ENCODE measurements at regions of chr14 and their contacts with region 1.

Region 1: DNA sequence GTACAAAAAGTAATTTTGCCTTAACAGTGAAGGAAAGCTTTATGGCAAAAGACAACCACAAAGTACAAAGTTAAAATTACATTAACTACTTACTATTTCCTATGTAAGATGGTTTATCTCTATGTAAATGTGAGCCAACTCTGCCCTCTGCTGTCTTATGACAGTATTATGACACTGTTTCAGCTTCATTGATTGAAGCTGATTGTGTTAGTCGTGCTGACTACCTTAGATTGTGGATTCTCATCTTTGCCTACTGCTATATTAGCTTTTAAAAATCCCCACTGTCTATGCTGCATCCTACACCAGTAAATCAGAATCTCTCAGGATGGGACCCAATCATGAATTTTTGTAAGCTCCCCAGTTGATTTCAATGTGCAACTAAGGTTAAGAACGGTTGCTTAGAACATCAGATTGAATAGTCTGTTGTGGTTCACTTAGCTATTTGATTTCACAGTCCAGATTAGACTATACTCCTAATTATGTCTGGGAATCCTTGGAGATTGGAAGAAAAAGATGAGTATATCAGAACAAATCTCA is 12.2 kb upstream of the SPTB start:
- DNase-seq: peak; percentile 76 to 87 (median 83)
- H3K4me3 ChIP-seq: no peak overlapping the region
- H3K27ac ChIP-seq: no peak overlapping the region
- H3K4me1 ChIP-seq: no peaks in the 10 kb centered on the region
- H3K27me3 ChIP-seq: peaks cover 0 to 6% (median 0%) of the 10 kb centered on the region in 5 experiments

Region 2: GRCh38 chr14:64764641-64765520 is 127.0 kb before region 1 on chr14:
- CTCF ChIA-PET with region 1: interaction called, 15 read pairs
- POLR2A ChIA-PET with region 1: no interaction called
- DNase-seq: peak; percentile 65 to 78 (median 68)
- H3K4me3 ChIP-seq: peak overlapping the region in 3 of 7 experiments; percentile 41 to 64 (median 52)
- H3K27ac ChIP-seq: no peak overlapping the region
- H3K4me1 ChIP-seq: peaks cover 0 to 41% (median 27%) of the 10 kb centered on the region in 4 experiments
- H3K27me3 ChIP-seq: peaks cover 0 to 21% (median 0%) of the 10 kb centered on the region in 5 experiments

Region 3: DNA sequence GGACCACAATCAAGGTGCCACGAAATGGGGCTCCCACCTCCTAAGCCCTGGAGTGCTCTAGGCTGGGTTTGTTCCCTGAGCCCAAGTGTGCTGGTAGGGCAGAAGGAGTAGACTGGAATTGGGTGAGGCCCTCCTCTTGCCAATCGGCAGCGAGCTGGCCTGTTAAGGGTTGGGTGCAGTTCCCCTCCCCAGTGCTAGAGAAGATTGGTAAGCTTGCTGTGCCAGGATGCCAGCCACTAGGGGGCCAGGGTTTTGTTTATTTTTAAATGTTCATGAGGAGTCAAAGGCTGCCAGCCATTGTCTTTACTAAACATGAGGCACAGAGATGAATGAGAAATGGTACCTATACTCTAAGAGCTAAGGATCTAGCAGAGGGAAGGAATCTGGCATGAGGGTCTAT is 91.9 kb before region 1 on chr14:
- CTCF ChIA-PET with region 1: interaction called, 78 read pairs
- POLR2A ChIA-PET with region 1: no interaction called
- DNase-seq: peak; percentile 43 to 58 (median 50)
- H3K4me3 ChIP-seq: no peak overlapping the region
- H3K27ac ChIP-seq: no peak overlapping the region
- H3K4me1 ChIP-seq: peaks cover 0 to 6% (median 1%) of the 10 kb centered on the region in 4 experiments
- H3K27me3 ChIP-seq: peaks cover 0 to 4% (median 0%) of the 10 kb centered on the region in 5 experiments

Region 4: DNA sequence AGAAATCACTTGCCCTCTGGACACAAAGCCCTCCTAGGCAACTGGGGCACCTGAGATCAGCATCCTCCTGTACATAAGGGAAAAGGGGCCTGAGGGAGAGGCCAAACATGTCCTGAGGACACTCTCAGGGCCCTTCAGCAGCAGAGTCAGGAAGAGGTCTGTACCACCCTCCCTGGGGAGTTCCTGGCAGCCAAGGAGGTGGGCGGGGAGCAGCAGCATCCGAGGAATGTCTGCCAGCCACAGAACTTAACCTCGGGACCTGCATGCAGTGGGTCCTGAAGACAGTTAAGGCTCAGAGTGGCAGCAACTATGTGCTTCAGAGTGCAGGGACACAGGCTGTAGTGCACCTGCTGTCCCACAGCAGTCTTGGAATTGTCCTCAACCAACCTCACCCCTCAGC is 74.3 kb before region 1 on chr14:
- CTCF ChIA-PET with region 1: interaction called, 113 read pairs
- POLR2A ChIA-PET with region 1: no interaction called
- DNase-seq: no peak
- H3K4me3 ChIP-seq: no peak overlapping the region
- H3K27ac ChIP-seq: no peak overlapping the region
- H3K4me1 ChIP-seq: no peaks in the 10 kb centered on the region
- H3K27me3 ChIP-seq: peaks cover 0 to 18% (median 0%) of the 10 kb centered on the region in 5 experiments

Region 5: GRCh38 chr14:64875350-64875749 is 16.6 kb before region 1 on chr14:
- CTCF ChIA-PET with region 1: interaction called, 77 read pairs
- POLR2A ChIA-PET with region 1: no interaction called
- DNase-seq: no peak
- H3K4me3 ChIP-seq: no peak overlapping the region
- H3K27ac ChIP-seq: no peak overlapping the region
- H3K4me1 ChIP-seq: peaks cover 0 to 15% (median 14%) of the 10 kb centered on the region in 4 experiments
- H3K27me3 ChIP-seq: peaks cover 5 to 35% (median 24%) of the 10 kb centered on the region in 5 experiments

Region 6: GRCh38 chr14:64910847-64911495 is 19.1 kb after region 1 on chr14:
- CTCF ChIA-PET with region 1: interaction called, 20 read pairs
- POLR2A ChIA-PET with region 1: no interaction called
- DNase-seq: peak in 2 of 3 donors; percentile 35 to 41
- H3K4me3 ChIP-seq: no peak overlapping the region
- H3K27ac ChIP-seq: no peak overlapping the region
- H3K4me1 ChIP-seq: peaks cover 10 to 26% (median 19%) of the 10 kb centered on the region in 4 experiments
- H3K27me3 ChIP-seq: no peaks in the 10 kb centered on the region

Region 7: DNA sequence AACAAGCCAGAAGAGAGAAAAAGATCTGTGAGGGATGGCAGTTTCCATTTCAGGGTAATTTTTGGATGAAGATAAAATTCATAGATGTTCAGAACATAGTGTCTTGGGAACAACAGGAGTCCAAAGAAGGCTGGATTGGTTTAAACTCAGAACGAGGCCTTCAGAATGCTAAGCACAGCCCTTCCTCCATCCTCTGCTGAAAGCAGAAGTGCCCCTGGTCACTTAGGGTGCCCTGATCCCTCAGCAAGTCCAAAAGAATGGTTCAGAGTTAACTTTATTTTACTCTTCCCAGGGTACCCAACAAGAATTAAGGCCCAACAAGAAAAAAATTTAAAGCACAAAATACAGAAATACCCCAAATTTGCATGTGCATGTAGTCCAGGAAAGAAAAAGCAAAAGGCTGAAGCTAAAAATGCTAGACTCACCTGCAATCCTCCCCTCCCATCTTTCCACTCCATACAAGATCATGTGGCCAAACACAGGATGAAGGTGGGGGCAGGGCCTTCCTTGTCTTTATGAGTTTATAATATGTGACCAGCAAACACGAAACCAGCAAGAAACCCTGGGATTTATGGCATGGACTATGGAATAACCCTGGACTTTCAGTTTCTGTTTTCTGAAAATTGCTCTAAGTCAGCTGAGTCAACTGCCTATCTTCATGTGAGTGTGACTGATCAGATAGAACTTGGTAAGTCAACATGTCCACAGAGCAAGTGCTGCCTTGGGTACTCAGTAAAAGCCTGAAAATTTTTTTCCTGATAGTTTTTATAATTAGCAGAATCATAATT is 189.2 kb after region 1 on chr14:
- CTCF ChIA-PET with region 1: no interaction called
- POLR2A ChIA-PET with region 1: no interaction called
- DNase-seq: no peak
- H3K4me3 ChIP-seq: peak overlapping the region in 1 of 7 experiments; percentile 14
- H3K27ac ChIP-seq: no peak overlapping the region
- H3K4me1 ChIP-seq: peaks cover 2 to 19% (median 11%) of the 10 kb centered on the region in 4 experiments
- H3K27me3 ChIP-seq: no peaks in the 10 kb centered on the region